Dorsolateral prefrontal cortex (tissue), 120 donors: ENCODE measurements at regions of chr3 and their contacts with region 1.

Region 1: DNA sequence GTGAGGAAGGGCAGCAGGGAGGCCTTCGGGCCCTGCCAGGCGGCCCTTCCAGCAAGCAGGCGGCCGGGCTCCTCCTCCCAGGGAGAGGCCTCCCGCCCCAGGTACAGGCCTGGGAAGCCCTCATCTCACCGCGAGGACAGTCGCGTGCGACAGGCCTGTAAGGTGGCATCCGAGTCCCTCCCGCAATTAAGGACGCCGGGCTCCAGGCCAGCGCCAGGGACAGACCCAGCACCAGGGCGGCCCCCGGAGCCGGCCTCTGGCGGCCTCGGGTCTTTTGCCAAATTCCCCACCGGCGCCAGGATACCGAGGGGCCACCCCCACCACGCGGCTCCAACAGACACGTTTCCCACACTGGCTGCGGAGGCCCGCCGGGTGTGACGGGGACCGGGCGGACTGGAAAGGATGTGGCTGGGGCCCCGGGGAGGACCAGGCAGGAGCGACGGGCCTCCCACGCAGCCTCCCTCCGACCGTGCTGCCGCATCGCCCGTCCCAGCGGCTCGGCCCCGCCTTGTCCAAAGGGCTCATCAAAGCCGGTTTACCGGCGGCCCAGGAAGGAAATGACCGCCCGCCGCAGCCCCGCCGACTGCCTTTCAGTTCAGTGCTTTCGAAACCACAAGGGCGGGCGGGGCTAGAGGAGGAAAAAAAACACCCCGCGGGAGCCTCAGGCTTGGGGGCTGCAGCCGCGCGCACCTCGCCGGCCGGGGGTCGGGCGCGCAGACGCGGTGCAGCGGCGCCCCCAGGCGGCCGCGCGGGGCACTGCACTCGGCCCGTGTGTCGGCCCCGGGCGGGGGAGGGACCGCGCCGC is 11.3 kb downstream of the XXYLT1 start:
- DNase-seq: peak; percentile 63 to 86 (median 74)
- H3K4me3 ChIP-seq: peak overlapping the region; percentile 57 to 87 (median 75)
- H3K27ac ChIP-seq: peak overlapping the region in 58 of 59 donors; percentile 38 to 94 (median 85)
- H3K27me3 ChIP-seq: no peaks in the 10 kb centered on the region
- CTCF ChIP-seq: peak in 53 of 56 donors; percentile 6 to 95 (median 68)

Region 2: GRCh38 chr3:194333212-194333980 is 926.3 kb before region 1 on chr3:
- intact Hi-C with region 1: loop called in 1 of 2 experiments (anchors 5 kb)
- DNase-seq: peak; percentile 79 to 92 (median 86)
- H3K4me3 ChIP-seq: peak overlapping the region; percentile 27 to 73 (median 55)
- H3K27ac ChIP-seq: no peak overlapping the region
- H3K27me3 ChIP-seq: peaks cover 0 to 13% (median 0%) of the 10 kb centered on the region in 45 donors
- CTCF ChIP-seq: peak; percentile 96 to 100 (median 100)

Region 3: DNA sequence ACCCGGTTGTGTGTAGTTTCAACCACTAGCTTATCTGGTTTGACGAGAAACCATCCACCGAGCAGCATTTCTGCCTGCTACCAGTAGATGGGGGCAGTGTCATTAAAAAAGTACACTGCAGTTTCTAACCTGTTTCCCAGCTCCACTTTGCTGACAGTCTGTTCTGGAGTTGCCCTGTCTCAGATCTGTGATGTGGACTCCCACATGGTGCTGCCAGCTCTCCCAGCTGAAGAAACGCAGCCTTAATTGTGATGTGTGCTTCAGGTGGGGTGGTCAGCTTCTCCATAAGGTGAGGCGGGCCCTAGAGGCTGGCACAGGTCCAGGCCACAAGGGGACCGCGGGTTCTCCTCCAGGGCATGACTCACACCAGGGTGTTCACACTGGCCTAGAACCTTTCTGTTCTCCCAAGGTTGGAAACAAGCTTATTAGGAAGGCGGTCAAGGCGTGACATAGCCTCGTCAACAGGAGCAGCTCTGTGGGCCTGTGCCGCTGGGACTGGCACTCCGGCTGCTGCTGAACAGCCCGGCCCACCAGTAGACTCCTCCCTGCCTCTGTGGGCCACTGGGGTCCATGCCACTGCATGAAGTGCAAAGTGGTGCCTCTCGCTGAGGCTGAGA is 576.9 kb before region 1 on chr3:
- intact Hi-C with region 1: loop called (anchors 2 kb)
- DNase-seq: peak; percentile 33 to 85 (median 70)
- H3K4me3 ChIP-seq: peak overlapping the region in 2 of 59 donors; percentile 15 to 16
- H3K27ac ChIP-seq: peak overlapping the region in 7 of 59 donors; percentile 12 to 54 (median 25)
- H3K27me3 ChIP-seq: peaks cover 0 to 6% (median 0%) of the 10 kb centered on the region in 45 donors
- CTCF ChIP-seq: peak; percentile 58 to 98 (median 92)

Region 4: GRCh38 chr3:195106418-195106906 is 153.2 kb before region 1 on chr3:
- intact Hi-C with region 1: loop called (anchors 5 kb)
- DNase-seq: peak; percentile 45 to 83 (median 64)
- H3K4me3 ChIP-seq: peak overlapping the region in 58 of 59 donors; percentile 7 to 62 (median 38)
- H3K27ac ChIP-seq: peak overlapping the region in 8 of 59 donors; percentile 14 to 67 (median 40)
- H3K27me3 ChIP-seq: no peaks in the 10 kb centered on the region
- CTCF ChIP-seq: peak; percentile 95 to 100 (median 99)

Region 5: DNA sequence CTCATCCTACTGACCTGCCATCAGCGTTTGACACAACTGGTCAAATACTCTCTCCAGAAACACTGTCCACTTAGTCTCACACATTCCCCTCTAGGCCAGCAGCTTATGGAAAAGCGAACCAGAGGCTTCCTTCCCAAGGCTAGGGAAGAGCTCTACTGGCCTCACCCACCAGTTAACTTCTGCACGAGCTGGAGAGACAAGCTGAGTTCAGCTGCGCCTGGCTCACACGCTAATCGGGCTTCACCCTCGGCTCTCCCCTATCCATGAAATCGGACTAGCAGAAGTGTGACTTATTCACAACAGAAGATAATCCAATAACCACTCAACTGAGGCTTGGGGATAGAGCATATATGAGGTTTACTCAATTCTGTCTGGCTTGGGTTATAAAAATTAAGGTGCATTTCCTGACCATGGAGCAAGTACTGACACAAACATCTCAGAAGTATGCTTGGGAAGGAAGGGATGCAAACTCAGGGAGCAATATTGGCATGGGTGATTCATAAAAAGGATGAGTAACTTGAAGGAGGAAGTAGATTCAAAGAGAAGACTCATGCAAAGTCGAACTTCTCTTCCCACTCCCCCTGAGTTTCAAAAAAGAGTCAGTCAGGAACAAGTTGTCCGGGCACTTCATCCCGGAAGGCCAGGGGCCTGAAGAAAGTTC is 61.8 kb before region 1 on chr3:
- intact Hi-C with region 1: loop called in 1 of 2 experiments (anchors 5 kb)
- DNase-seq: peak in 1 of 10 donors; percentile 17
- H3K4me3 ChIP-seq: no peak overlapping the region
- H3K27ac ChIP-seq: peak overlapping the region in 4 of 59 donors; percentile 10 to 43 (median 26)
- H3K27me3 ChIP-seq: no peaks in the 10 kb centered on the region
- CTCF ChIP-seq: no peak

Region 6: GRCh38 chr3:195352895-195353488 is 93.3 kb after region 1 on chr3:
- intact Hi-C with region 1: no loop called
- DNase-seq: no peak
- H3K4me3 ChIP-seq: no peak overlapping the region
- H3K27ac ChIP-seq: no peak overlapping the region
- H3K27me3 ChIP-seq: no peaks in the 10 kb centered on the region
- CTCF ChIP-seq: no peak

Region 7: DNA sequence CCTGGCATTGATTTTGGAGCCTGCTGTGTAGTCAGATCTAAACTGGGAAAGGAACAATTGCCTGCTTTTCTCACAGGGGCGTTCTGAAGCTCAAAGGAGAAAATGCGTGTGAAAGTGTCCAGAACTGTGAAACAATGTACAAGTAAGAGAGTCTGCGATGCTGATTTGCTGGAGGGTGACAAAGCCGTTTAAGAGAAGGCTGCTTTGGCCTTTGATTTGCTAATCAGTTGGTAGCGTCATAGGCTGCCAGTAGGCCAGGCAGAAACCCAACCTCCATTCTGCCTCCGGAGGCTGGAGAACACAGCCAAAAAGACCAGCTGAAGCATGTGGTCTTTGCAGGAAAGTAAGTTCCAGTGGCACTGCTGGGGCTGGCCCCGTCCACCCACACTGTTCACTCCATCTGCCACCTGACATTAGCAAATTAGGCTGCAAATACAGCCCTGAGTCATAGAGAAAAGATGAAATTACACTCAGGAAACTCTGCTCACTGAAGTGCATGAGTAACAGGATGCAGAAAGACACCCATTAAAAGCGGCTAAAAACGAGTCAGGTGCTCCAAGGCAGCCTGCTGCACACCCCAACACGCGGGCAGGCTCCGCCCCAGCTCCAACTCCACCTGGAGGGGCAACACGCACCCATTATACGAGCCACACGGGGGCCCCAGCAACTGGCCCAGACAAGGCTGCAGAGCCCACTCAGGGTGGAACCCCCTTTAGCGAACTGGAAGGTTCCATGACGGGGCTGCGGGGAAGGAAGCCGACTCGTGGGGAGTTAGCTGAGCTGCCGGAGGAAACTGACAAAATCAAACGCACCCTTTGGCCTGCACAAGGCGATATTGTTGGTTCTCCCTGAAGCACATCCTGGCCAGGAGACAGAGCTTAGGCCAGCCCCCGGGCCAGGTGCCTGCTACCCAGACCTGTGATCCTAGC is 920.0 kb after region 1 on chr3:
- intact Hi-C with region 1: no loop called
- DNase-seq: peak; percentile 40 to 91 (median 79)
- H3K4me3 ChIP-seq: peak overlapping the region; percentile 1 to 61 (median 35)
- H3K27ac ChIP-seq: peak overlapping the region; percentile 20 to 90 (median 81)
- H3K27me3 ChIP-seq: no peaks in the 10 kb centered on the region
- CTCF ChIP-seq: peak in 6 of 56 donors; percentile 3 to 18 (median 14)